OCI-LY7 (cell line): ENCODE measurements at regions of chr3 and their contacts with region 1.

Region 1: DNA sequence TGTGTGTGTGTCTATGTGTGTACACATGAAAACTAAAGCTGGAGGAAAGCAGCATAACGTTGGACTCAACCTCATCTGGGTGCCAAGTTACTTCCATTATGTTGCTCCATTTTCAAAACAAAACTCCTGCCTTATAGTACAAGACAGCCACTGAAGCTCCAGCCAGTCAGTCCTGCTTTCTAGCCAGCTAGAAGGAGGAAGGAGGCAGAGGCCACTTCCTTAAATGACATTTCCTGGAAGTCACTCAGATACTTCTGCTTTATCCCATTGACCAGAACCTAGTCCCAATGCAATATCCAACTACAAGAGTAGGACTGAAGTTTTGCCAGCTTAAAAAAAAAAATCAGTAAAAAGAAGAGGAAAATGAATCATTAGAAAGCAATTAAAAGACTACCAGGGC is 31.7 kb downstream of the CADPS start:
- DNase-seq: peak; percentile 31
- H3K4me3 ChIP-seq: no peak overlapping the region
- H3K27ac ChIP-seq: no peak overlapping the region
- H3K4me1 ChIP-seq: peaks cover 31% of the 10 kb centered on the region
- CTCF ChIP-seq: no peak

Region 2: GRCh38 chr3:62859203-62859791 is 15.8 kb after region 1 on chr3:
- CTCF ChIA-PET with region 1: no interaction called
- POLR2A ChIA-PET with region 1: interaction called, 15 read pairs
- intact Hi-C with region 1: no loop called
- DNase-seq: no peak
- H3K4me3 ChIP-seq: no peak overlapping the region
- H3K27ac ChIP-seq: no peak overlapping the region
- H3K4me1 ChIP-seq: peaks cover 19% of the 10 kb centered on the region
- CTCF ChIP-seq: no peak